SK-N-SH (cell line): ENCODE measurements at regions of chr15 and their contacts with region 1.

Region 1: GRCh38 chr15:35289024-35289617 is 204.0 kb upstream of the NANOGP8 start:
- DNase-seq: peak; percentile 58
- H3K4me3 ChIP-seq: no peak overlapping the region
- H3K27ac ChIP-seq: peak overlapping the region in 1 of 2 experiments; percentile 90; a peak in 2 of 4 replicates
- H3K4me1 ChIP-seq: peaks cover 13 to 36% of the 10 kb centered on the region in 2 experiments; a peak in 3 of 4 replicates
- H3K27me3 ChIP-seq: no peaks in the 10 kb centered on the region
- CTCF ChIP-seq: peak; percentile 91
- EP300 ChIP-seq: 0 out of 4 replicates have a peak, but pooled peaks of 1 of the 2 experiments have one; percentile 2
- RAD21 ChIP-seq: peak; percentile 97

Region 2: DNA sequence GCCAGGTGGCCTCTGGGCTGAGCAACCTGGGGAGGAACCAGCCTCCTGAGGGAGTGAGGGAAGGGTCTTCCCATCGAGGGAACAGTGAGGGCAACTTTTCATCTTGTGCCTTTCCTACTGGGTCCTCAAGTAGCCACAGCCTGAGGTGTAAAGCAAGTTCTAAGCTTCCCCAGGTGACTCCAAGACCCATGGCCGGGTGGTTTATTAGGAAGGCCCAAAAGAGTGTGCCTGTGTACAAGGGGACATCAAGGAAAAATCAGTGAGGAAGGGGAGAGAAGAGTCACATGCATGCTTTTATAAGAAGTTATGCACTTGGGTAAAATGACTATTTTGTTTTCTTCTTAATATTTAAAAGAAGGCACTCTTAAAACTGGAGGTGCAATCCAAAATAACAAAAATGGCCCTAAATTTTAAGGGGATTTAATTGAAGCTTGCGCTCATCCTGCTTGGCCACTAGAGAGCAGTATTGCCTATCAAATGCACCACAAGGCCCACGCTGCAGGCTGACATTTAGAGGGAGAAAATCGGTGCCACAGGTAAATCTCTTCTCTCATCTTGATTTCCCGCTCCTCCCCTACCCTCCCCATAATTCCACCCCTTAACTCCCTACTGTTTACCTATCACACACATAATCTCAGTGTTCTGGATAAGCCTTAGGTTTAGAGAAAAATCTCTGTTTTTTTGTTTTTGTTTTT is 210.8 kb before region 1 on chr15:
- CTCF ChIA-PET with region 1: interaction called, 19 read pairs
- POLR2A ChIA-PET with region 1: interaction called, 3 read pairs
- DNase-seq: peak; percentile 75
- H3K4me3 ChIP-seq: no peak overlapping the region; a peak in 1 of 4 replicates
- H3K27ac ChIP-seq: no peak overlapping the region
- H3K4me1 ChIP-seq: no peaks in the 10 kb centered on the region
- H3K27me3 ChIP-seq: no peaks in the 10 kb centered on the region
- CTCF ChIP-seq: peak; percentile 96
- EP300 ChIP-seq: no peak
- RAD21 ChIP-seq: peak; percentile 98

Region 3: DNA sequence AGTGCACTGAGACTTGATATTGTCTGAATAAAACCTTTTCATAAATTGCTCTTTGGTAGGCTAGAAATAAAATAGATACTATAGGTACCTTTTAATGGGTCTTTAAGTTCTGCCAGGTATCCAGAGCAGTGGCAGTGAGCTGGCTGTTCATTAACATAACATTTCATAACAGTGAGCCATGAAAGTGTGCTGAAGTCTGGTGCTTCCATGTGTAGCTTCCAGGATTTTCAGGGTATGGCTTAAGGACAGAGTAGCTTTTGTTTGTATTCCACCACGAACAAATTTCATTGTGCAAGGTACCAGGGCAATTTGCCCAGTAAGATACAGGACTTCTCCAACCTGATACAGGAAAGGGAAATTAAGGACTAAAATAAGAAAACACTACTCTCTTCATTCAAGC is 79.3 kb before region 1 on chr15:
- CTCF ChIA-PET with region 1: no interaction called
- POLR2A ChIA-PET with region 1: no interaction called
- DNase-seq: no peak
- H3K4me3 ChIP-seq: no peak overlapping the region
- H3K27ac ChIP-seq: no peak overlapping the region
- H3K4me1 ChIP-seq: peaks cover 0 to 3% of the 10 kb centered on the region in 2 experiments; a peak in 2 of 4 replicates
- H3K27me3 ChIP-seq: no peaks in the 10 kb centered on the region
- CTCF ChIP-seq: no peak
- EP300 ChIP-seq: no peak
- RAD21 ChIP-seq: no peak

Region 4: DNA sequence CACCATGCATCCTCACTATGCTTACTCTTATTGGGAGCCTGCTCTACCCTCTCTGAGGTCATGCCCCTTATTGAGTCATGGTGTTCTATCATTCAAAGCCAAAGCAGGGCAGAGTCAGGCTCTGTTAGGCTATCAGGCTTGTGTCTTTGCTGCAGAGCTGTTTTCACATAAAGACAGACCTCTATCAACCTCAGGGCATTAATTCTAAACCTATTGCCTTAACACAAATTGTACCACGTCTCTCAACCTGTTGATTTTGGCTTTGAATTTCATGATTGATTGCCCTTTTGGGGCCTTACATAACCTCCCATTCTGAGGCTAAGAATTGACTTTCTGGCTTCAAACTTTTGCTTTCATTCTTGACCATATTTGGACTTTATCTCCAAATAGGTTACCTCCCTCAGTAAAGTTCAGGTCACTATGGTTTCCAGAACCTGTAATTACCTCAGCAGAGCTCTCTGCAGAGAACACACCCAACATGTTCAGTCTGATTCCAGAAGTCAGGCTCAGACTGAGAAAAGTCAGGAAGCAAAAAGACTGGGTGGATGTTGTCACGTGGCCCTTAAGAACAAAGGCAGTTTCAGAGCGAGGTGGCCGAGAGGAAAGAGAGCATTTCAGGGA is 17.4 kb after region 1 on chr15:
- CTCF ChIA-PET with region 1: interaction called, 13 read pairs
- POLR2A ChIA-PET with region 1: no interaction called
- DNase-seq: no peak
- H3K4me3 ChIP-seq: peak overlapping the region in 1 of 2 experiments; percentile 8; a peak in 1 of 4 replicates
- H3K27ac ChIP-seq: peak overlapping the region; percentile 92 to 96
- H3K4me1 ChIP-seq: peaks cover 26 to 56% of the 10 kb centered on the region in 2 experiments
- H3K27me3 ChIP-seq: no peaks in the 10 kb centered on the region
- CTCF ChIP-seq: no peak
- EP300 ChIP-seq: no peak
- RAD21 ChIP-seq: no peak

Region 5: DNA sequence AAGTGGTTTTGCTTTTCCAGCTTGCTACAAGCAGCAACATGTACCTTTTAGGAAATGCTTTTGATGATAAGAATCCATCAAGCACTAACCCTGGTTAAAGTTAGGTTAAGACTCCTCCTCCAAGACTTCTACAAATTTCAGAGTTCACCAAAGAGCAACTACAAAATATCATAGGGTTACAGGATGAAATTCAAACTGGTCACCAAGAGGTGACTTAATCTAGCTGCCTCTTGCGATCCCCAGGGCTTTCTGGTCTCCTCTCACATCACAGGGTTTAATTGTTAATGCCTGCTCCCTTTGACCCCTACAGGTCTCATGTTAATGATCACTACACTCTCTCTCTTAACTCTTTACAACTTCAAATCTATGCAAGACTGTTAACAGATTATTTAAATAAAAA is 190.3 kb after region 1 on chr15:
- CTCF ChIA-PET with region 1: interaction called, 10 read pairs
- POLR2A ChIA-PET with region 1: no interaction called
- DNase-seq: no peak
- H3K4me3 ChIP-seq: no peak overlapping the region
- H3K27ac ChIP-seq: peak overlapping the region in 1 of 2 experiments; percentile 22; a peak in 1 of 4 replicates
- H3K4me1 ChIP-seq: peaks cover 6 to 11% of the 10 kb centered on the region in 2 experiments; a peak in 3 of 4 replicates
- H3K27me3 ChIP-seq: no peaks in the 10 kb centered on the region
- CTCF ChIP-seq: no peak
- EP300 ChIP-seq: no peak
- RAD21 ChIP-seq: no peak

Region 6: GRCh38 chr15:35519541-35520149 is 230.5 kb after region 1 on chr15:
- CTCF ChIA-PET with region 1: interaction called, 18 read pairs
- POLR2A ChIA-PET with region 1: no interaction called
- DNase-seq: peak; percentile 11
- H3K4me3 ChIP-seq: no peak overlapping the region
- H3K27ac ChIP-seq: peak overlapping the region in 1 of 2 experiments; percentile 69; a peak in 1 of 4 replicates
- H3K4me1 ChIP-seq: peaks cover under 1 to 9% of the 10 kb centered on the region in 2 experiments; a peak in 3 of 4 replicates
- H3K27me3 ChIP-seq: no peaks in the 10 kb centered on the region
- CTCF ChIP-seq: peak; percentile 87
- EP300 ChIP-seq: no peak
- RAD21 ChIP-seq: peak; percentile 93